Naive thymus-derived CD4-positive, alpha-beta T cell (primary cell): ENCODE measurements at regions of chr2 and their contacts with region 1.

Region 1: DNA sequence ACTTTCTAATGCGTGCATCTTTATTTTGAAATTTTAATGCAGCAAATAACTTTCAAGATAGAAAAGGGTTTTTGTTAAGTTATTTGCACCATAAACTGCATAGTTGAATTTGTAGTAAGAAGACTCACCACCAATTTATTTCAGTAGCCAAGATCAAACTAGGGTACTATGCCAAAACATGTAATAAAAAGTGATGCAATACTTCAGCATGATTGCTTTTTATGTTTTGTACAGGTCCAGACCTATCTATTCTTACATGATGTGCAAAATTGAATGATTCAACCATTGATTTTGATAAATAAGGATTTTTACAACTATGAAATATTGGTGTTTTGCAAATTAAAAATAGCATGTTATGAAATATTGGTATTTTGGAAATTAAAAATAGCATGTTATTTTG is 26.7 kb downstream of the AGPS start:
- DNase-seq: no peak
- ATAC-seq: no peak
- H3K4me3 ChIP-seq: no peak overlapping the region
- H3K4me3 Mint-ChIP-seq: no peak overlapping the region
- H3K27ac ChIP-seq: no peak overlapping the region
- H3K27ac Mint-ChIP-seq: peak overlapping the region in 1 of 9 donors; percentile 22
- H3K4me1 ChIP-seq: no peaks in the 10 kb centered on the region
- H3K4me1 Mint-ChIP-seq: peaks cover 5 to 54% (median 27%) of the 10 kb centered on the region in 7 donors
- H3K27me3 ChIP-seq: no peaks in the 10 kb centered on the region
- H3K27me3 Mint-ChIP-seq: no peaks in the 10 kb centered on the region

Region 2: GRCh38 chr2:177296040-177296439 is 123.2 kb before region 1 on chr2:
- CTCF ChIA-PET with region 1: no interaction called
- POLR2A ChIA-PET with region 1: interaction called, 3 read pairs
- intact Hi-C with region 1: loop called in 1 of 2 experiments (anchors 1 kb)
- DNase-seq: peak in 6 of 9 donors; percentile 27 to 52 (median 41)
- ATAC-seq: peak; percentile 70
- H3K4me3 ChIP-seq: no peak overlapping the region
- H3K4me3 Mint-ChIP-seq: no peak overlapping the region
- H3K27ac ChIP-seq: no peak overlapping the region
- H3K27ac Mint-ChIP-seq: peak overlapping the region in 3 of 9 donors; percentile 22 to 56 (median 32)
- H3K4me1 ChIP-seq: peaks cover 0 to 1% of the 10 kb centered on the region in 2 donors
- H3K4me1 Mint-ChIP-seq: peaks cover 0 to 34% (median 23%) of the 10 kb centered on the region in 7 donors
- H3K27me3 ChIP-seq: no peaks in the 10 kb centered on the region
- H3K27me3 Mint-ChIP-seq: no peaks in the 10 kb centered on the region

Region 3: GRCh38 chr2:177455187-177455586 is 35.9 kb after region 1 on chr2:
- CTCF ChIA-PET with region 1: no interaction called
- POLR2A ChIA-PET with region 1: no interaction called
- intact Hi-C with region 1: no loop called
- DNase-seq: no peak
- ATAC-seq: no peak
- H3K4me3 ChIP-seq: no peak overlapping the region
- H3K4me3 Mint-ChIP-seq: no peak overlapping the region
- H3K27ac ChIP-seq: no peak overlapping the region
- H3K27ac Mint-ChIP-seq: no peak overlapping the region
- H3K4me1 ChIP-seq: no peaks in the 10 kb centered on the region
- H3K4me1 Mint-ChIP-seq: peaks cover 0 to 3% (median 0%) of the 10 kb centered on the region in 7 donors
- H3K27me3 ChIP-seq: no peaks in the 10 kb centered on the region
- H3K27me3 Mint-ChIP-seq: no peaks in the 10 kb centered on the region

Region 4: GRCh38 chr2:177489719-177490301 is 70.5 kb after region 1 on chr2:
- CTCF ChIA-PET with region 1: no interaction called
- POLR2A ChIA-PET with region 1: no interaction called
- intact Hi-C with region 1: no loop called
- DNase-seq: no peak
- ATAC-seq: no peak
- H3K4me3 ChIP-seq: no peak overlapping the region
- H3K4me3 Mint-ChIP-seq: no peak overlapping the region
- H3K27ac ChIP-seq: no peak overlapping the region
- H3K27ac Mint-ChIP-seq: no peak overlapping the region
- H3K4me1 ChIP-seq: no peaks in the 10 kb centered on the region
- H3K4me1 Mint-ChIP-seq: no peaks in the 10 kb centered on the region
- H3K27me3 ChIP-seq: no peaks in the 10 kb centered on the region
- H3K27me3 Mint-ChIP-seq: no peaks in the 10 kb centered on the region

Region 5: DNA sequence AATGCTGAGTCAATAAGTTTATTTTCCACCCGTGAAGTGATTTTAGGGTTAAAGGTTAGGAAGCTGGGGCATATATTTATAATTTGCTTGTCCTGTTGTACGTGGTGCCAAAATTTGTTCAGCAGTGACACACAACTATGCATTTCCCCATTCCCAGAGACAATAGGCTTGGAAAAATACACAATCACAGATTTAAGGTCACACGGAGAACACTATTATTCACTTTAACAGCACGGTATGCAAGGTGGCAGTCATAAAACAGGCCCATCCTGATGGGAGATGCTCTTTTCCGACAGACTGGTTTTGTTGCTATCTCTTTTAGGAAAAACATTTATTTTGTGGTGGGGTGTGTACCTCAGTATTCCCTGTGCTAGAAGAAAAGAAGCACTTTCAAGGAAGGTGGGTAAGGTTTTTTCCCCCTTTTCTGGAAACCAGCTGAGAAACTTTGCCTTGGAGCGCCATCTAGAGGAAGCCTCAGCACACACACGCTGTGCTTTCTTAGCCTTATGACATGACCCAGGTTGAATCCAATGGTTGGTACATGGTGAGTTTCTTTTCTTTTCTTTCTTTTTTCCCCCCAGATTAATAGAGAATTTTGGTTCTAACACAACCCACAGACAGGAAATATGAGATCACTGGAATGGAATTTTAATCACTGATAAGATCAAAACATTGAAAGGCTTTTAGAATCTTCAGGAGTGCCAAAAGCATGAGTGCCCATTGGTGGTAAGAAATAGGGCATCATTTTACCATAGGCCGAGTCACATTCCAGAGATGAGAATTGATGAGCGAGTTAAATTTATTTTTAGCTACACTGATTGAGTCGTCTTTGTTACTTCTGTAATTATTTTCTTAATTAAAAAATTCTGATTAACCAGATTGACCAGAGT is 305.4 kb after region 1 on chr2:
- CTCF ChIA-PET with region 1: no interaction called
- POLR2A ChIA-PET with region 1: no interaction called
- intact Hi-C with region 1: loop called (anchors 2 to 10 kb)
- DNase-seq: peak in 7 of 9 donors; percentile 9 to 37 (median 20)
- ATAC-seq: peak; percentile 55
- H3K4me3 ChIP-seq: no peak overlapping the region
- H3K4me3 Mint-ChIP-seq: no peak overlapping the region
- H3K27ac ChIP-seq: no peak overlapping the region
- H3K27ac Mint-ChIP-seq: no peak overlapping the region
- H3K4me1 ChIP-seq: no peaks in the 10 kb centered on the region
- H3K4me1 Mint-ChIP-seq: peaks cover 0 to 2% (median 0%) of the 10 kb centered on the region in 7 donors
- H3K27me3 ChIP-seq: no peaks in the 10 kb centered on the region
- H3K27me3 Mint-ChIP-seq: peaks cover 11 to 33% (median 14%) of the 10 kb centered on the region in 5 donors